Caco-2 (cell line): ENCODE measurements at regions of chr4 and their contacts with region 1.

Region 1: DNA sequence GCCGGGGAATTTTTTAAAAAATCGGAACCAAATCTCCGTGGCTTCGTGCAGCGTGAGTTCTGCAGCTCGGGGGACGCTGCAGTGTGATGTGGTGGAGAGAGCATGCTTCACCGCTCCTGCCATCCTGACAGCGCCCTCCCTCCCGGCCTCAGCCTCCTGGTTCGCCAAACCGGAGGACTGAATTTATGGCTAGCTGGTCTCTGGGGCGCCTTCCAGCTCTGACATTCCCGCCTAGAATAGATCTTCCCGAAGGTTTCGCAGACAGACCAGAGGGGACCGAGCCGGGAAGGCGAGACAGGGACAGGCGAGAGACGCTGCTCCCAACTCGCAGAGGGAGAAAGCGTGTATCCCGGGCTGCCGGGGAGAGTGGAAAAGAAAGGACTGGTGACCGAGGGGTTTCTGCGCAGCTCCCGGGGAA is 25.9 kb downstream of the HOPX start:
- DNase-seq: peak in 1 of 2 experiments; percentile 38
- H3K4me3 ChIP-seq: peak overlapping the region; percentile 37
- H3K4me3 Mint-ChIP-seq: peak overlapping the region; percentile 92
- H3K27ac Mint-ChIP-seq: peak overlapping the region; percentile 82
- H3K4me1 ChIP-seq: no peaks in the 10 kb centered on the region
- H3K4me1 Mint-ChIP-seq: no peaks in the 10 kb centered on the region
- H3K27me3 ChIP-seq: no peaks in the 10 kb centered on the region
- H3K27me3 Mint-ChIP-seq: peaks cover 17% of the 10 kb centered on the region
- CTCF ChIP-seq: no peak

Region 2: DNA sequence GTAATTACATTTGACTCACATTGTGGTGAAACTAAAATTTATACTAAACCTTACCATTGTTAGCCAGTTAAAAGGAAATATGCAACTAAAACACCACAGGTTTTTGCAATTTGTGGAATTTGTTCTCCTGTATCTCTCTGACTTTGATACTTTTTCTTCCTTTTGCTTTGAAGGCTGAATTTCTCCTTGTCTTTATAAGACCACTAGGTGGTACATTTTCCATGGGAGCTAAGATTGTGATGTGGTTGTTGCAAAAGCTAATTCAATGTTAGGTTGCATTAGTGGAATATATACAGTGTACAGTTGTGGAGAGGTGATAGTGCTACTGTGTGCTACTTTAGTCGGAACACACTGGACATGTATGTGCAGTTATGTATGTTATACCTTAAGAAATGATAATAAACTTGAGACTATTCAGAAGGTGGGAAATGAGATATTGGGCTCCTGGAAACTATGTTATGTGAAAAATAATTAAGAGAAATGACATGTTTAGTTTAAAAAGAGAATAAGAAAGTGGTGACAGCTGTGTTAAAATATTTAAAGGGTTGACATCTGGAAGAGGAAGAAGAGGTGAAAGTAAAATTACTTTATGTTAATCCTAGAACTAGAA is 79.3 kb before region 1 on chr4:
- CTCF ChIA-PET with region 1: interaction called, 4 read pairs
- POLR2A ChIA-PET with region 1: no interaction called
- intact Hi-C with region 1: loop called (anchors 5 kb)
- DNase-seq: no peak
- H3K4me3 ChIP-seq: no peak overlapping the region
- H3K4me3 Mint-ChIP-seq: no peak overlapping the region
- H3K27ac Mint-ChIP-seq: no peak overlapping the region
- H3K4me1 ChIP-seq: no peaks in the 10 kb centered on the region
- H3K4me1 Mint-ChIP-seq: no peaks in the 10 kb centered on the region
- H3K27me3 ChIP-seq: no peaks in the 10 kb centered on the region
- H3K27me3 Mint-ChIP-seq: no peaks in the 10 kb centered on the region
- CTCF ChIP-seq: peak; percentile 31 to 46

Region 3: DNA sequence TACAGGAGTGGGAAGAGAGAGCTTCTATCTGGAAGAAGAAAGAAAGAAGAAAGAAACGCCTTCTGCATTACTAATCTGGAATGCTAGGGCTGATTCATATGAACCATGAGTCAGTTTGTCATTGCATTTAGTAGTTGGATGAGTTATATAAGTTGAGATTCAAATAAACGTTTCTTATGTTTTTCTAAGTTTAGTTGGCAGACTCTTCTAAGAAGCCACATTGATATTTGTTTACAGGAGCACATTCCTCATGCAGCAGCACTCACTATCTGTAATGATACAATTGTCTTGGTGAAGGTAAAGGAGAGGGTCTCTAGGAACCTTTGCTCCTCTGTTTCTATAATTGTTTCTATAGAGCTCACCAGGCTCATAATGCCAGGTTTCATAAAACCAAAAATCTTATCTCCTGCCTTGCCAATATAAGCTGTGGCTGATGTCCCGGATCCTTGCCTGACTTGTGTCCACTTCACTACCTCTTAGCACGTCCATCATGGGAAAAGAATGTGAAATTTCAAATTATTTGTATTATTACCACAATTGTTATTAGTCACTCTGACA is 13.6 kb before region 1 on chr4:
- CTCF ChIA-PET with region 1: interaction called, 11 read pairs
- POLR2A ChIA-PET with region 1: no interaction called
- intact Hi-C with region 1: no loop called
- DNase-seq: no peak
- H3K4me3 ChIP-seq: no peak overlapping the region
- H3K4me3 Mint-ChIP-seq: no peak overlapping the region
- H3K27ac Mint-ChIP-seq: no peak overlapping the region
- H3K4me1 ChIP-seq: peaks cover 7% of the 10 kb centered on the region; the same call in 1 of the 2 replicates
- H3K4me1 Mint-ChIP-seq: peaks cover 6% of the 10 kb centered on the region
- H3K27me3 ChIP-seq: no peaks in the 10 kb centered on the region
- H3K27me3 Mint-ChIP-seq: no peaks in the 10 kb centered on the region
- CTCF ChIP-seq: no peak